GM12878 (cell line): ENCODE measurements at regions of chr17 and their contacts with region 1.

Region 1: GRCh38 chr17:7989781-7990655 is 12.4 kb upstream of the GUCY2D start:
- DNase-seq: peak; percentile 49
- ATAC-seq: peak; percentile 94
- H3K4me3 ChIP-seq: peak overlapping the region; percentile 63; the same call in 1 of the 2 replicates
- H3K27ac ChIP-seq: no peak overlapping the region
- H3K4me1 ChIP-seq: peaks cover 5% of the 10 kb centered on the region
- H3K27me3 ChIP-seq: 0 out of 4 replicates have a peak, but pooled peaks cover 0 to 2% of the 10 kb centered on the region in 2 experiments
- CTCF ChIP-seq: peak; percentile 93 to 98 (median 94)
- EP300 ChIP-seq: no peak
- POLR2A ChIP-seq: peak; percentile 74
- RAD21 ChIP-seq: peak; percentile 68

Region 2: GRCh38 chr17:7818746-7819645 is 171.0 kb before region 1 on chr17:
- CTCF ChIA-PET with region 1: interaction called, 9 read pairs
- POLR2A ChIA-PET with region 1: no interaction called
- RAD21 ChIA-PET with region 1: interaction called, 3 read pairs
- SMC1A ChIA-PET with region 1: interaction called, 3 read pairs
- in situ Hi-C with region 1: loop called (anchors 5 kb)
- intact Hi-C with region 1: loop called (anchors 1 kb)
- DNase-seq: no peak
- ATAC-seq: no peak
- H3K4me3 ChIP-seq: no peak overlapping the region
- H3K27ac ChIP-seq: no peak overlapping the region
- H3K4me1 ChIP-seq: no peaks in the 10 kb centered on the region
- H3K27me3 ChIP-seq: peaks cover 0 to 2% of the 10 kb centered on the region in 2 experiments; a peak in 2 of 4 replicates
- CTCF ChIP-seq: no peak
- EP300 ChIP-seq: no peak
- POLR2A ChIP-seq: no peak
- RAD21 ChIP-seq: no peak

Region 3: DNA sequence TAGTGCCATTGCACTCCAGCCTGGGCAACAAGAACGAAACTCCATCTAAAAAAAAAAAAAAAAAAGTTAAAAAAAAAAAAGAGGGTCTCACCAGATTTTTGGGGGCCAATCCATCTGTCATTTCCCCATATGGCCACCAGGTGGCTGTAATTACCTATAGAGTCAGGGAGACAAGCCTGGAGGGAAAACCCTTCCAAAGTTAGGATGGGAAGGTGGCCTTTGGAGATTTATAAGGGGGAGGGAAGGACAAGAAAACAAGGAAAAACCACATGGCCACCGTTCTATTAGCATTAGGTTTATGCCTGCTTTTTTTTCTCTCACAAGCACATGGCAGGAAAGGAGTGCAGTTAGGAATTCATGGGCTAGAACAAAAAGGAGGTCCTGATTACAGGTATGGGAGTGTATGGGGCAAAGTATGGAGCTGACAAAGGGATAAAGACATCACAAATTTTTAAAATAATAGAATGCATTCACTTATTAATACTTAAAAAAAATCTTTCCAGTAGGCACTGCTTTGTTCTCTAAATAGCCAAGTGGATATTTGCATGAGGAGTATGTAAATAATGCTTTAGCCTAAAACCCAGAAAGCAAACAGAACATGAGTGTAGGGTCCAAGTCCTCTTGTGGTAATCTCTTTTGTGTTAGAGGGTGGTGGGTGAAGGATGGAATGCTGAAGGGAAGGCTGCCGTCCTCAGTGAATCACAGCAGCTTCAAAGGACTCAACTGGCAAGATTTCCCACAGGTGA is 127.2 kb before region 1 on chr17:
- CTCF ChIA-PET with region 1: interaction called, 308 read pairs
- POLR2A ChIA-PET with region 1: interaction called, 3 read pairs
- RAD21 ChIA-PET with region 1: interaction called, 65 read pairs
- SMC1A ChIA-PET with region 1: interaction called, 41 read pairs
- in situ Hi-C with region 1: loop called (anchors 5 kb)
- intact Hi-C with region 1: loop called (anchors 1 kb)
- DNase-seq: no peak
- ATAC-seq: no peak
- H3K4me3 ChIP-seq: no peak overlapping the region
- H3K27ac ChIP-seq: no peak overlapping the region
- H3K4me1 ChIP-seq: peaks cover 4% of the 10 kb centered on the region
- H3K27me3 ChIP-seq: no peaks in the 10 kb centered on the region
- CTCF ChIP-seq: peak; percentile 64 to 73 (median 67)
- EP300 ChIP-seq: no peak
- POLR2A ChIP-seq: no peak
- RAD21 ChIP-seq: peak; percentile 93

Region 4: GRCh38 chr17:7931709-7932482 is 58.1 kb before region 1 on chr17 and contains the starts of genes CNTROB and TRAPPC1:
- CTCF ChIA-PET with region 1: interaction called, 76 read pairs
- POLR2A ChIA-PET with region 1: interaction called, 3 read pairs
- RAD21 ChIA-PET with region 1: interaction called, 9 read pairs
- SMC1A ChIA-PET with region 1: interaction called, 13 read pairs
- in situ Hi-C with region 1: no loop called
- intact Hi-C with region 1: loop called (anchors 5 kb)
- DNase-seq: peak; percentile 98
- ATAC-seq: peak; percentile 92
- H3K4me3 ChIP-seq: peak within 1 kb of the TSS; percentile 100
- H3K27ac ChIP-seq: peak within 1 kb of the TSS; percentile 96
- H3K4me1 ChIP-seq: peaks cover 8% of the 10 kb centered on the region
- H3K27me3 ChIP-seq: no peaks in the 10 kb centered on the region
- CTCF ChIP-seq: no peak
- EP300 ChIP-seq: peak in 1 of 2 experiments; percentile 27; a peak in 1 of 4 replicates
- POLR2A ChIP-seq: peak; percentile 92
- RAD21 ChIP-seq: no peak
- polyA plus RNA-seq, gene CNTROB: 2.0 to 4.2 TPM
- polyA plus RNA-seq, gene TRAPPC1: 95.5 to 113 TPM

Region 5: DNA sequence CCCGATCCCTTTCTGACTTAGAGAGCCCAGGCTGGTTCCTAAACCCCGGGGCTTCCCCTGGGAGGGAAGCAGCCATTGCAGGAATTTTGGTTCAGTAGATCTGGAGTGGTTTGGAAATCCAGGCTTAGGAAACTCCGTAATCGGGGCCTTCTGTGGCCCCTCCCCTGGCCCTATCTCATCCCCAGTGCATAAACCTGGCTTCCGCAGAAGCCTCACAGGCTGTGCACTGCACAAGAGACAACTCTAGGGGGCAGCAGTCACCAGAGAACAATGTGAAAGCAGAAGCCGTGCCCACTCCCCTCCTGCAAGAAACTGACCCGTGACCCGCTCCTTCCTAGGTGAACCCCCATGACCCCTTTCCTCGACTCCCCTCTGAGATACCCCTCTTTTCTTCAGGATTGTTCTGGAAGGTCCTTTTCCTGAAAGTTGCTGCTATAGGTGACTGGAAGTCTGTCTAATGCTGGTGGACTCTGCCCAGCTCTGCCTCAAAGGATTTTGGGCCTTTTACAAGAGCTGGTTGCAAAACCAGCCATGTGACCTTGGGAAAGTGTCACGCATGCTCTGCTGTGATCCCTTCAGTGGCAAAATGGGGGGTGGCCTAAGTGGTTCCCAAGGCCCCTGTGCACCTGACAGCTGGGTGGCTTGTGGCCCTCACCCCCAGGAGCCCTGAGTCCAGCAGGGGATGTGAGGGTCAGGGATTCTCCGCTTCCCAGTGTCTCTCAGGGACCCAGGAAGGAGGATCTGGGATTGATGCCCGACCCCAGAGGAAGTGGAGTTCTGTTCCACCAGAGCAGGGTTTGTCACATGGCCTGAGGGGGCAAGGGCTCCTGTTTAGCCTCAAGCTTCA is 26.8 kb after region 1 on chr17:
- CTCF ChIA-PET with region 1: interaction called, 16 read pairs
- POLR2A ChIA-PET with region 1: no interaction called
- RAD21 ChIA-PET with region 1: interaction called, 4 read pairs
- SMC1A ChIA-PET with region 1: interaction called, 5 read pairs
- in situ Hi-C with region 1: no loop called
- intact Hi-C with region 1: no loop called
- DNase-seq: no peak
- ATAC-seq: peak; percentile 87
- H3K4me3 ChIP-seq: no peak overlapping the region
- H3K27ac ChIP-seq: no peak overlapping the region
- H3K4me1 ChIP-seq: no peaks in the 10 kb centered on the region
- H3K27me3 ChIP-seq: peaks cover 0 to 3% of the 10 kb centered on the region in 2 experiments; a peak in 3 of 4 replicates
- CTCF ChIP-seq: peak; percentile 51 to 77 (median 63)
- EP300 ChIP-seq: no peak
- POLR2A ChIP-seq: no peak
- RAD21 ChIP-seq: peak; percentile 46